Panc1 (cell line): ENCODE measurements at regions of chr16 and their contacts with region 1.

Region 1: GRCh38 chr16:73565262-73565661 is 517.3 kb upstream of the ZFHX3 start:
- DNase-seq: no peak
- ATAC-seq: no peak
- H3K4me3 ChIP-seq: no peak overlapping the region
- H3K27ac ChIP-seq: no peak overlapping the region
- H3K4me1 ChIP-seq: no peaks in the 10 kb centered on the region
- H3K27me3 ChIP-seq: no peaks in the 10 kb centered on the region
- CTCF ChIP-seq: peak; percentile 39; the same call in 1 of the 2 replicates

Region 2: GRCh38 chr16:73601911-73602310 is 36.6 kb after region 1 on chr16:
- CTCF ChIA-PET with region 1: no interaction called
- POLR2A ChIA-PET with region 1: no interaction called
- in situ Hi-C with region 1: no loop called
- intact Hi-C with region 1: no loop called
- DNase-seq: no peak
- ATAC-seq: no peak
- H3K4me3 ChIP-seq: no peak overlapping the region
- H3K27ac ChIP-seq: no peak overlapping the region
- H3K4me1 ChIP-seq: no peaks in the 10 kb centered on the region
- H3K27me3 ChIP-seq: no peaks in the 10 kb centered on the region
- CTCF ChIP-seq: no peak

Region 3: GRCh38 chr16:73878611-73879010 is 313.3 kb after region 1 on chr16:
- CTCF ChIA-PET with region 1: no interaction called
- POLR2A ChIA-PET with region 1: no interaction called
- in situ Hi-C with region 1: no loop called
- intact Hi-C with region 1: loop called (anchors 5 kb)
- DNase-seq: peak; percentile 32
- ATAC-seq: no peak
- H3K4me3 ChIP-seq: no peak overlapping the region
- H3K27ac ChIP-seq: no peak overlapping the region
- H3K4me1 ChIP-seq: no peaks in the 10 kb centered on the region
- H3K27me3 ChIP-seq: no peaks in the 10 kb centered on the region; the same call in none of the 2 replicates
- CTCF ChIP-seq: peak; percentile 39; the same call in 1 of the 2 replicates

Region 4: DNA sequence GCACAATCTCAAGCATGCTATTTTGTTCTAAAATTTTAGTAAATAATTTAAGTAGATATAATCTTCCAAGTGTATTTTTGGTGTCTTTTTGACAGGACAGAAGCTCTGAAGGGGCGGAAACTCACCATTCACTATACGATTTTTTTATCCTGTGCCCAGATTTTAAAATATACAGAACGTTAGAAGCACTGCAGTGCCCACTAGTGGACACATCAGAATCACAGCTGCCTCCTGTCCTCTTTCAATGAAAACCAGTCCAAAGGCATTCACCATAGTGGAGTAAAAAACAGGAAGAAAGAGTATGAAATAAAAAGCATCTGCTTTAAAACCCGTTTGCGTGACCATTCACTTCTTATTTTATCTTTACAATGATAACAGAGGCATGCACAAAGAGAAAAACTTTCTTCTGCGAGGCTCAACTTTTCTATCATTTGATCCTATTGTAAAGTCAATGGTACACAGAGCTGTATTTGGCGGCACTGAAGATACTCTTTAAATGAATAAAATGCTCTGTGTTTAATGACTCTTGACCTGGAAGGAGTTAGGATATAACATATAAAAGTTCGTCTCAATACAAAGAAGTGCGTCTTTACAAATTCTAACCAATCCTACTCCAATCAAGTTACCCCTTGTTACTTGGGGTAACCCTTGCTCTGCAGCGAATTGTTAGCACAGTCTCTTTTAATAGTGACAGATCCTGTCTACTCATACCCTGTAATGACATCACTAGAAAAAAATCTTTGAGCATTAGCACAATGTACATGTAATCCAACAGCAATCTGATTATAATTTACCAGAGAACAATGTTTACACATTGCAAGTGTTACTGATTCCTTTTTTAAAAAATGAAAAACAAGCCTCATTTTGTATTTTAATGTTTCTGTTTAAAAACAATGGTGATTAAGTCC is 391.6 kb after region 1 on chr16:
- CTCF ChIA-PET with region 1: no interaction called
- POLR2A ChIA-PET with region 1: no interaction called
- in situ Hi-C with region 1: no loop called
- intact Hi-C with region 1: loop called (anchors 5 kb)
- DNase-seq: peak; percentile 18
- ATAC-seq: no peak
- H3K4me3 ChIP-seq: no peak overlapping the region
- H3K27ac ChIP-seq: no peak overlapping the region
- H3K4me1 ChIP-seq: no peaks in the 10 kb centered on the region
- H3K27me3 ChIP-seq: no peaks in the 10 kb centered on the region; the same call in 1 of the 2 replicates
- CTCF ChIP-seq: peak; percentile 79; the same call in 1 of the 2 replicates